AG04450 (cell line): ENCODE measurements at regions of chr17 and their contacts with region 1.

Region 1: GRCh38 chr17:48878918-48879898 is 13.4 kb upstream of the ATP5MC1 start:
- DNase-seq: peak; percentile 33
- H3K4me3 ChIP-seq: no peak overlapping the region
- H3K27ac ChIP-seq: no peak overlapping the region
- H3K27me3 ChIP-seq: peaks cover 10% of the 10 kb centered on the region
- CTCF ChIP-seq: peak; percentile 97

Region 2: GRCh38 chr17:48678141-48678971 is 200.9 kb before region 1 on chr17:
- CTCF ChIA-PET with region 1: interaction called, 68 read pairs
- POLR2A ChIA-PET with region 1: no interaction called
- DNase-seq: no peak
- H3K4me3 ChIP-seq: no peak overlapping the region
- H3K27ac ChIP-seq: no peak overlapping the region
- H3K27me3 ChIP-seq: peaks cover 25% of the 10 kb centered on the region
- CTCF ChIP-seq: peak; percentile 84

Region 3: GRCh38 chr17:48724251-48725003 is 154.8 kb before region 1 on chr17:
- CTCF ChIA-PET with region 1: interaction called, 85 read pairs
- POLR2A ChIA-PET with region 1: interaction called, 6 read pairs
- DNase-seq: peak; percentile 39
- H3K4me3 ChIP-seq: no peak overlapping the region
- H3K27ac ChIP-seq: no peak overlapping the region
- H3K27me3 ChIP-seq: peaks cover 96% of the 10 kb centered on the region
- CTCF ChIP-seq: peak; percentile 82

Region 4: GRCh38 chr17:48804925-48805411 is 74.2 kb before region 1 on chr17:
- CTCF ChIA-PET with region 1: interaction called, 164 read pairs
- POLR2A ChIA-PET with region 1: no interaction called
- DNase-seq: no peak
- H3K4me3 ChIP-seq: no peak overlapping the region
- H3K27ac ChIP-seq: no peak overlapping the region
- H3K27me3 ChIP-seq: peaks cover 12% of the 10 kb centered on the region
- CTCF ChIP-seq: peak; percentile 95

Region 5: GRCh38 chr17:48841395-48841831 is 37.8 kb before region 1 on chr17:
- CTCF ChIA-PET with region 1: interaction called, 23 read pairs
- POLR2A ChIA-PET with region 1: no interaction called
- DNase-seq: peak; percentile 10
- H3K4me3 ChIP-seq: peak overlapping the region; percentile 51
- H3K27ac ChIP-seq: no peak overlapping the region
- H3K27me3 ChIP-seq: no peaks in the 10 kb centered on the region
- CTCF ChIP-seq: no peak

Region 6: GRCh38 chr17:48930435-48930873 is 51.2 kb after region 1 on chr17:
- CTCF ChIA-PET with region 1: no interaction called
- POLR2A ChIA-PET with region 1: no interaction called
- DNase-seq: no peak
- H3K4me3 ChIP-seq: no peak overlapping the region
- H3K27ac ChIP-seq: no peak overlapping the region
- H3K27me3 ChIP-seq: no peaks in the 10 kb centered on the region
- CTCF ChIP-seq: no peak

Region 7: GRCh38 chr17:48954300-48954755 is 75.1 kb after region 1 on chr17:
- CTCF ChIA-PET with region 1: no interaction called
- POLR2A ChIA-PET with region 1: no interaction called
- DNase-seq: no peak
- H3K4me3 ChIP-seq: no peak overlapping the region
- H3K27ac ChIP-seq: no peak overlapping the region
- H3K27me3 ChIP-seq: no peaks in the 10 kb centered on the region
- CTCF ChIP-seq: peak; percentile 67

Region 8: GRCh38 chr17:49031965-49032928 is 153.0 kb after region 1 on chr17:
- CTCF ChIA-PET with region 1: interaction called, 65 read pairs
- POLR2A ChIA-PET with region 1: interaction called, 4 read pairs
- DNase-seq: peak; percentile 60
- H3K4me3 ChIP-seq: no peak overlapping the region
- H3K27ac ChIP-seq: no peak overlapping the region
- H3K27me3 ChIP-seq: no peaks in the 10 kb centered on the region
- CTCF ChIP-seq: peak; percentile 93